Lower leg skin (tissue), 4 donors: ENCODE measurements at regions of chr5 and their contacts with region 1.

Region 1: DNA sequence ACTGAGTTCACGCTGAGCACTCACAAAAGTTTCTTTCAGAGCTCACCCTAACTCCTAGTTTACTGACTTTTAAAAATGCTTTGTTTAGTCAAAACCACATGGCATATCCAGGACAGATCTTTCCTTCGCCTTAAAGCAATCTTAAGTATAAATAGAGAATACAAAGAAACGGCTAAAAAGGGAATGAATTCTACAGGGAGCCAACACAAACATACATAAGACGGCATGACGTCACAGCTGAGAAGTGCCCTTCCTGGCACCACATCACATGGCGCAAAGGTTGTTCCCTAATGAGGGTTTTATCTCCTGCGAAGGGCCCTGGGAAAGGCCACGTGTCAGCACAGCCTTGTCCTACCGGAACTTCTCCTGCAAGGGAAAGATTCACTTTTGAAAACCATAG is 141.3 kb downstream of the IRX1 start:
- DNase-seq: no peak
- H3K4me3 ChIP-seq: no peak overlapping the region
- CTCF ChIP-seq: no peak
- POLR2A ChIP-seq: no peak

Region 2: GRCh38 chr5:2442496-2443354 is 1294.2 kb before region 1 on chr5:
- intact Hi-C with region 1: loop called (anchors 5 kb)
- DNase-seq: no peak
- H3K4me3 ChIP-seq: no peak overlapping the region
- CTCF ChIP-seq: no peak
- POLR2A ChIP-seq: no peak

Region 3: GRCh38 chr5:3451961-3452360 is 285.0 kb before region 1 on chr5:
- intact Hi-C with region 1: no loop called
- DNase-seq: no peak
- H3K4me3 ChIP-seq: no peak overlapping the region
- CTCF ChIP-seq: no peak
- POLR2A ChIP-seq: no peak

Region 4: DNA sequence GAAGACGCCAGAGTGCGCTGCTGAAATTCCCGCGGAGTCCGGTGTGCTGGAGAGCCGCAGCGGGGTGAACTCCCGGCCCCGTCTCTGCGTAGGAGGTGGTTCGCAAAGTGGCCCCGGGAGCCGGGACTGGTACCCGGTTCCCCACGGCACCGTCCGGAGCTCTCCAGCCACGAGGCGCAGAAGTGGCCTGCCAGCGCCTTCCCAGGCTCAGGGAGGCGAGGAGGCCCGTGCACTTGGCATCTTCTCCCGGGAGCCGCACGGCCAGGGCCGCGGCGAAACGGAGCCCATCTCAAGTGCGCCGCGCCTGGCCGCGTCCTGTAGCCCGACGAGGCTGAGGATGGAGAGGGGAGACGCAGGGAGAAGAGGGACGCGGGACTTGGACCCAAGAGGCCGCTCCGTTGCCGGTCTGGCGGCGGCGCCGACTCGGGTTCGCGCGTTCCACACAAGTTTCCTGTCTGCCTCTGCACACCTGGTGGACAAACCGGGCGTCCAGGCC is 142.4 kb before region 1 on chr5:
- intact Hi-C with region 1: no loop called
- DNase-seq: no peak
- H3K4me3 ChIP-seq: peak overlapping the region; percentile 13
- CTCF ChIP-seq: no peak
- POLR2A ChIP-seq: no peak

Region 5: DNA sequence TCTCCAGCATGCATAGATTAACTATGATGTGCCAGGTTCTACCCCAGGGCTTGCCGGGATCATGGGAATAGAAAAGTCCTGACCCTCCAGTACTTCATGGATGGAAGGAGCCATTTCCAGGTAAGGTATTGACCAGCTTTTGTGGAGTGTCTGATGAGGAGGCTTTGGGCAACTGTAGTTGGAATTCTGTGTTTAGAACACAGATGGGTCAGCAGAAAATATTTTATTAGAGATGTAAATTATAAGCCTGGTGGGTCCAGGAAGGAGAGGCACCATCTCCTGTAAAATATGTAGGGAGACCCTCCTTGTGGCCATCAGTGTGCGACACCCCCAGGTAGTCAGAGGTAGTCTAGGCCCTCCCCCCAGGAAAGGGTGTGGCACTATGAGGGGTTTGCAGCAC is 14.9 kb after region 1 on chr5:
- intact Hi-C with region 1: no loop called
- DNase-seq: no peak
- H3K4me3 ChIP-seq: no peak overlapping the region
- CTCF ChIP-seq: no peak
- POLR2A ChIP-seq: no peak